Naive thymus-derived CD4-positive, alpha-beta T cell (primary cell): ENCODE measurements at regions of chr1 and their contacts with region 1.

Region 1: DNA sequence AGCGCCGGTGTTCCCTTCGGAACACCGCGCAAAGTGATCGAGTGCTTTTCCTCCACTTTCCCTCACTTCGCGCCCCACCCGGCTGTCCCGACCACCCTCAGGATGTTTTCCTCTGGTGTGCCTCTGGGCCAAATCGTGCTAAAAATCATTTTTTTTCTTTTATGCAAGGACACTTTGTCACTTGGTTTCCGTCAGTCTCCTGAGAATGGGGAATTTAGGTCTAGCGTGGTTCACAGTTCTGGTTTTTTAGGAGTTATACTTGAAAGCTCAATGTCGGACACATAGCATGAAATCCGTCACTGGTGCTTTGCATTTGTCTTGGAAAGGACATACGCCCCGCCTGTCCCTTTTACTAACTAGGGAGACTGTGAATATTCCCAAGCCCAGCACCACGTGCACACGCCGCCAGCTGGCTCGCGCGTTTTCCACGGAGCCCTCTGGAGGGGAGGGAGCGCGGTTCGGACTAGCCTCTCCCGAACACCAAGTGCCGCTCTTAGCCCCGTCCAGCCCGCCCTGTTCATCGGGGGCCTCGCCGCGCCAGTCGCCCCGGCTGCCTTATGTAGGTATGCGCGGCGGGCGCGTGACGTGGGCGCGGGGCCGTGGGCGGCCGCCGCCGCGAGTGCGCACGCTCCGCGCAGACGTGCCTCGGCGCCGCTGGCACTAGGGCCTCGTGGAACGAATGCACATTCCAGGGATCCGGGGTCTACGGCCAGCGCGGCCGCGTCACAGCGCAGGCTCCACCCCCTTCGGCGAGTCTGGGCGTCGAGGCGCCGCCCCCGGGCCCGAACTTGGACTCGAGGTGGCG is 572 bp upstream of the IRF2BP2 start:
- DNase-seq: peak; percentile 89 to 93 (median 91)
- ATAC-seq: peak; percentile 67
- H3K4me3 ChIP-seq: peak overlapping the region; percentile 89
- H3K4me3 Mint-ChIP-seq: peak overlapping the region; percentile 80 to 98 (median 90)
- H3K27ac ChIP-seq: peak overlapping the region; percentile 97
- H3K27ac Mint-ChIP-seq: peak overlapping the region; percentile 97 to 100 (median 99)
- H3K4me1 ChIP-seq: peaks cover 34 to 43% of the 10 kb centered on the region in 2 donors
- H3K4me1 Mint-ChIP-seq: peaks cover 45 to 62% (median 54%) of the 10 kb centered on the region in 7 donors
- H3K27me3 ChIP-seq: no peaks in the 10 kb centered on the region
- H3K27me3 Mint-ChIP-seq: peaks cover 0 to 6% (median 0%) of the 10 kb centered on the region in 5 donors

Region 2: DNA sequence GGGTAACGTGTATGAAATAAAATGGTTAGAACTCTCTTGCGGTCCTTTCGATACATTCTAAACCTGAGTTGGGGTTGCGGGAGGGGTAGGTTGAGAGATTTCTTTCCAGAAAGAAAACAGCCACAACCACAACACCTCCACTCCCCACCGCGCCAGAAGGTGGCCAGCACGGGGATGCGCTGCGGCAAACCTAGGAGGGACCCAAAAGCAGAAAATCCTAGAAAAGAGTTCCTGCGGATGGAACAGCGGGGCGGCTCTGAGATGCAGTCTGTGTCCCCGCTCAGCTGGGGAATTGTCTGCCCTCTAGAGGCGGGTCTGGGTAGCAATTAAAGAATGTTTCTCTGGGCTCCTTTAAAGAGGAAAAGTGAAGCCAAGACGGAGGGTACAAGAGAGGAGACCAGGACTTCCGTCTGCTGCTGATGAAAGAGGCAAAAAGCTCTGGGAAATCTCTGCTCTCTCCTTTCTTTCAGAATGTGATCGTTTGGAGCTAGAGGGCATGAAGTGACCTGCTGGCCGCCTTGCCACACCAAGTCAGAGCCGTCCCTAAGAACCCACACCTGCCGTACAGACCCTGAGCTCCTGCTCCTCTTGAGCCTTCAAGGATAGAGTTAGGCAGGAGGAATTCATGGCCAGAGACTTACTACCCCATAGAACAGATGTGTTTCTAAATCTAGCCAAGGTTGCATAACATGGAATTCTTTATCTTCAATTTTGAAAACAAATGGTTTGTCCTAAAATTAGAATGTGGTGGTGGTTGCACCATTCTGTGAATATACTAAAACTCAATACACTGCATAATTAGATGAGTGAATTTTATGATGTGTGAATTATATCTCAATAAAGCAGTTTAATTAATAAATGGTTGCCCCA is 283.8 kb before region 1 on chr1:
- CTCF ChIA-PET with region 1: no interaction called
- POLR2A ChIA-PET with region 1: no interaction called
- intact Hi-C with region 1: no loop called
- DNase-seq: peak; percentile 32 to 79 (median 67)
- ATAC-seq: peak; percentile 92
- H3K4me3 ChIP-seq: peak overlapping the region; percentile 64
- H3K4me3 Mint-ChIP-seq: peak overlapping the region; percentile 76 to 94 (median 90)
- H3K27ac ChIP-seq: peak overlapping the region; percentile 67
- H3K27ac Mint-ChIP-seq: peak overlapping the region; percentile 41 to 99 (median 85)
- H3K4me1 ChIP-seq: peaks cover 0 to 4% of the 10 kb centered on the region in 2 donors
- H3K4me1 Mint-ChIP-seq: peaks cover 23 to 36% (median 30%) of the 10 kb centered on the region in 7 donors
- H3K27me3 ChIP-seq: no peaks in the 10 kb centered on the region
- H3K27me3 Mint-ChIP-seq: peaks cover 4 to 23% (median 12%) of the 10 kb centered on the region in 5 donors

Region 3: GRCh38 chr1:234499119-234499942 is 111.2 kb before region 1 on chr1:
- CTCF ChIA-PET with region 1: no interaction called
- POLR2A ChIA-PET with region 1: no interaction called
- intact Hi-C with region 1: loop called in 1 of 2 experiments (anchors 1 kb)
- DNase-seq: peak; percentile 65 to 85 (median 78)
- ATAC-seq: peak; percentile 96
- H3K4me3 ChIP-seq: no peak overlapping the region
- H3K4me3 Mint-ChIP-seq: peak overlapping the region in 2 of 10 donors; percentile 33 to 62
- H3K27ac ChIP-seq: no peak overlapping the region
- H3K27ac Mint-ChIP-seq: peak overlapping the region in 4 of 9 donors; percentile 34 to 82 (median 74)
- H3K4me1 ChIP-seq: peaks cover 0 to 4% of the 10 kb centered on the region in 2 donors
- H3K4me1 Mint-ChIP-seq: peaks cover 0 to 62% (median 6%) of the 10 kb centered on the region in 7 donors
- H3K27me3 ChIP-seq: no peaks in the 10 kb centered on the region
- H3K27me3 Mint-ChIP-seq: no peaks in the 10 kb centered on the region

Region 4: DNA sequence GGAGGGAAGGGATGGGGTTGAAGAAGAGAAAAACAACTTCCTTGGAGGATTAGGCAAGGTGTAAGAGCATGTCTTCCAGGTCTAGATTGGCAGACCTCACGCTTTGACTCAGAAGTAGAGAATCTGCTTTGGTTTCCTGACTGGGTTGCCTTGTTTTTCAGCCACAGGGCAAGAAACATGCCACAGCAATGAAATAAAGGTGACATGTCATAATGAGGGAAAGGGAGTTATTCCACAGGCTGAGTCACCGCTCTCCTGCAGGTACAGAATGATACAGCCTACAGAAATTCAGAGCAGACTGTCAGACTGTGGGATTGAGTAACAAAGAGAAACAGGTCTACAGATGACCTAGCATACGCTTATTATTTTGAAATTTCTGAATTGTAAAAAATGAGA is 45.9 kb before region 1 on chr1:
- CTCF ChIA-PET with region 1: no interaction called
- POLR2A ChIA-PET with region 1: no interaction called
- intact Hi-C with region 1: no loop called
- DNase-seq: no peak
- ATAC-seq: no peak
- H3K4me3 ChIP-seq: no peak overlapping the region
- H3K4me3 Mint-ChIP-seq: no peak overlapping the region
- H3K27ac ChIP-seq: no peak overlapping the region
- H3K27ac Mint-ChIP-seq: no peak overlapping the region
- H3K4me1 ChIP-seq: no peaks in the 10 kb centered on the region
- H3K4me1 Mint-ChIP-seq: peaks cover 0 to 6% (median 0%) of the 10 kb centered on the region in 7 donors
- H3K27me3 ChIP-seq: no peaks in the 10 kb centered on the region
- H3K27me3 Mint-ChIP-seq: peaks cover 0 to 6% (median 0%) of the 10 kb centered on the region in 5 donors

Region 5: DNA sequence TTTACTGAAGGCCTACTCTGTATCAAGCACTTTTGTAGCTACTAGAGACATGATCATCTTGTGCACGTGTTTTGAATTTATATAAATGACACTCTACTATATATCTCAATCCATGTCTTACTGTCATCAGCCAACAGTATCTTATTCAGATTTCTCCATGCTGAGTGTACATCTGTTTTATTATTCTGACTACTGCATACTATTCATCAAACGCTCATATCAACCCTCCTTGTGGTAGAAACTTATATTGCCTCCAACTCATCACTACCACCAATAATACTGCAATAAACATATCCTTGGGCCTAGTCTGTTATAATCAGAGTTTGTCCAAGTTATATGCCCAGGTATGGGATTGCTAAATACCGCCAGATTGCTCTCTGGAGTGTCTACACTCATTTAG is 81.0 kb after region 1 on chr1:
- CTCF ChIA-PET with region 1: interaction called, 23 read pairs
- POLR2A ChIA-PET with region 1: interaction called, 5 read pairs
- intact Hi-C with region 1: loop called in 1 of 2 experiments (anchors 1 kb)
- DNase-seq: peak in 6 of 9 donors; percentile 8 to 41 (median 28)
- ATAC-seq: peak; percentile 69
- H3K4me3 ChIP-seq: no peak overlapping the region
- H3K4me3 Mint-ChIP-seq: no peak overlapping the region
- H3K27ac ChIP-seq: no peak overlapping the region
- H3K27ac Mint-ChIP-seq: peak overlapping the region in 3 of 9 donors; percentile 4 to 7 (median 5)
- H3K4me1 ChIP-seq: no peaks in the 10 kb centered on the region
- H3K4me1 Mint-ChIP-seq: peaks cover 0 to 7% (median 4%) of the 10 kb centered on the region in 7 donors
- H3K27me3 ChIP-seq: no peaks in the 10 kb centered on the region
- H3K27me3 Mint-ChIP-seq: peaks cover 0 to 4% (median 0%) of the 10 kb centered on the region in 5 donors

Region 6: GRCh38 chr1:234842726-234843641 is 232.4 kb after region 1 on chr1:
- CTCF ChIA-PET with region 1: no interaction called
- POLR2A ChIA-PET with region 1: interaction called, 10 read pairs
- intact Hi-C with region 1: loop called (anchors 1 to 2 kb)
- DNase-seq: peak in 8 of 9 donors; percentile 7 to 81 (median 30)
- ATAC-seq: peak; percentile 26
- H3K4me3 ChIP-seq: peak overlapping the region; percentile 5
- H3K4me3 Mint-ChIP-seq: peak overlapping the region; percentile 30 to 77 (median 62)
- H3K27ac ChIP-seq: peak overlapping the region; percentile 15
- H3K27ac Mint-ChIP-seq: peak overlapping the region; percentile 30 to 90 (median 77)
- H3K4me1 ChIP-seq: peaks cover 36 to 57% of the 10 kb centered on the region in 2 donors
- H3K4me1 Mint-ChIP-seq: peaks cover 44 to 89% (median 74%) of the 10 kb centered on the region in 7 donors
- H3K27me3 ChIP-seq: no peaks in the 10 kb centered on the region
- H3K27me3 Mint-ChIP-seq: no peaks in the 10 kb centered on the region

Region 7: GRCh38 chr1:235128456-235129328 is 518.1 kb after region 1 on chr1 and contains the start of gene TOMM20:
- CTCF ChIA-PET with region 1: interaction called, 3 read pairs
- POLR2A ChIA-PET with region 1: interaction called, 3 read pairs
- intact Hi-C with region 1: loop called in 1 of 2 experiments (anchors 1 kb)
- DNase-seq: peak; percentile 91 to 97 (median 95)
- ATAC-seq: peak; percentile 97
- H3K4me3 ChIP-seq: peak within 1 kb of the TSS; percentile 98
- H3K4me3 Mint-ChIP-seq: peak within 1 kb of the TSS; percentile 88 to 99 (median 96)
- H3K27ac ChIP-seq: peak within 1 kb of the TSS; percentile 94
- H3K27ac Mint-ChIP-seq: peak within 1 kb of the TSS; percentile 93 to 99 (median 98)
- H3K4me1 ChIP-seq: peaks cover 22 to 24% of the 10 kb centered on the region in 2 donors
- H3K4me1 Mint-ChIP-seq: peaks cover 17 to 55% (median 42%) of the 10 kb centered on the region in 7 donors
- H3K27me3 ChIP-seq: no peaks in the 10 kb centered on the region
- H3K27me3 Mint-ChIP-seq: no peaks in the 10 kb centered on the region
- total RNA-seq, gene TOMM20: 88.0 to 124 (median 100) TPM

Region 8: GRCh38 chr1:235866913-235867845 is 1256.6 kb after region 1 on chr1:
- CTCF ChIA-PET with region 1: no interaction called
- POLR2A ChIA-PET with region 1: no interaction called
- intact Hi-C with region 1: loop called (anchors 1 to 5 kb)
- DNase-seq: peak; percentile 97 to 100 (median 99)
- ATAC-seq: peak; percentile 85
- H3K4me3 ChIP-seq: peak overlapping the region; percentile 89
- H3K4me3 Mint-ChIP-seq: peak overlapping the region; percentile 84 to 99 (median 96)
- H3K27ac ChIP-seq: peak overlapping the region; percentile 99
- H3K27ac Mint-ChIP-seq: peak overlapping the region; percentile 93 to 100 (median 98)
- H3K4me1 ChIP-seq: peaks cover 25 to 31% of the 10 kb centered on the region in 2 donors
- H3K4me1 Mint-ChIP-seq: peaks cover 32 to 55% (median 51%) of the 10 kb centered on the region in 7 donors
- H3K27me3 ChIP-seq: no peaks in the 10 kb centered on the region
- H3K27me3 Mint-ChIP-seq: no peaks in the 10 kb centered on the region